WTC11 (cell line): ENCODE measurements at regions of chr17 and their contacts with region 1.

Region 1: DNA sequence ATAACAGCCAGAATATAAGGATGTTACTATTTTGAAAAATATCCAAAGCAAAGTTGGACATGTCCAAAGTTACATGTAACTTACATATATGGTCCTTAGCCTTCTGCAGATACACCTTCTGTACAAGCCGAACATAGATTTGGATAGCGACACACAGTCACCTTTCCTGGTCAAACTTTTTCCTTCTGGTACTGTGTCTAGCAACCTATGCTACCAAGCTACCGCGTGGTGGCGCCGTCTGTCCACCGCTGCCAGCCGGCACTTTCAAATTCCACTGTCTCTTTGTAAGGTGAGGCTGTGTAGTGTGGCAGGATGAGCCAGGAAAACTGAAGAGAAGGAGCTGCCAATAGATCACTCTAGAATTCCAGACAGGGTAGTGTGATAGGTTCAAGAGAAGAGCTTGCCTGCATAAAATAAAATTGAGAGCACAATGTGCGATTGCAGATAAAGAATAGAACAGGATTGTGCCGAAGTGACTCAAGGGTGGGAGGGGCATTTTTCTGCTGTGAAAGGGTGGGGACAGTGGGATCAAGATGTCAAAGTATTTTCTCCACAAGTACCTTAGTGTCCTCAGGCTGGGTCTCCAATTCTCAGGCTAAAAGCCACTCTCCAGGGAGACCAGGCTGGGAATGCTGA is 366.9 kb downstream of the SLC39A11 start:
- DNase-seq: peak; percentile 64
- ATAC-seq: peak; percentile 77
- H3K4me3 Mint-ChIP-seq: no peak overlapping the region
- H3K27ac Mint-ChIP-seq: peak overlapping the region; percentile 50; the same call in 1 of the 2 replicates
- H3K4me1 Mint-ChIP-seq: peaks cover 48% of the 10 kb centered on the region
- H3K27me3 Mint-ChIP-seq: no peaks in the 10 kb centered on the region
- CTCF ChIP-seq: peak; percentile 87

Region 2: GRCh38 chr17:72592242-72592966 is 133.1 kb before region 1 on chr17:
- CTCF ChIA-PET with region 1: interaction called, 10 read pairs
- POLR2A ChIA-PET with region 1: no interaction called
- DNase-seq: peak; percentile 81
- ATAC-seq: peak; percentile 84
- H3K4me3 Mint-ChIP-seq: peak overlapping the region; percentile 84
- H3K27ac Mint-ChIP-seq: no peak overlapping the region
- H3K4me1 Mint-ChIP-seq: peaks cover 32% of the 10 kb centered on the region
- H3K27me3 Mint-ChIP-seq: peaks cover 53% of the 10 kb centered on the region
- CTCF ChIP-seq: no peak

Region 3: GRCh38 chr17:72775919-72776318 is 50.4 kb after region 1 on chr17:
- CTCF ChIA-PET with region 1: interaction called, 16 read pairs
- POLR2A ChIA-PET with region 1: no interaction called
- DNase-seq: no peak
- ATAC-seq: no peak
- H3K4me3 Mint-ChIP-seq: no peak overlapping the region
- H3K27ac Mint-ChIP-seq: no peak overlapping the region
- H3K4me1 Mint-ChIP-seq: peaks cover 12% of the 10 kb centered on the region
- H3K27me3 Mint-ChIP-seq: peaks cover 2% of the 10 kb centered on the region; the same call in 1 of the 2 replicates
- CTCF ChIP-seq: no peak

Region 4: DNA sequence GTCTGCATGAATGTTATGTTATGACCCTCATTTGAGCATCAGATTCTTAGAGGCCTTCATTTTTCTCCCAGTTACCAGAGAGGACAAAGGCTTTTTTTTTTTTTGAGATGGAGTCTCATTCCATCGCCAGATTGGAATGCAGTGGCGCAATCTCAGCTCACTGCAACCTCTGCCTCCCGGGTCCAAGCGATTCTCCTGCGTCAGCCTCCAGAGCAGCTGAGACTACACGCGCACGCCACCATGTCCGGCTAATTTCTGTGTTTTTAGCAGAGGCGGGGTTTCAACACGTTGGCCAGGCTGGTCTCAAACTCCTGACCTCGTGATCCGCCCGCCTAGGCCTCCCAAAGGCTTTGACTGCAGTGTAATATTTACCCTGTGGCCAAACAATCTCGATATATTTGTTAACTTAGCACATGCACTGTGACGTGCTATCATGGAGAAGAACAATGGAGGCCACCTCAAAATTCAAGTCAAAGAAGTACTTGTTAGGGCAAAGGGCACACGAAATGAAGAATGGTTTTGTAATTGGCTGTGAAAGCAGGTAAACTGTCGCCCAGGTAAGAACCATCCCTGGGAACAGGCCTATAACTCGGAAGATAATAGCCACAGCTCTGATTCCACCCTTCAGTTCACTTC is 63.5 kb after region 1 on chr17:
- CTCF ChIA-PET with region 1: no interaction called
- POLR2A ChIA-PET with region 1: no interaction called
- DNase-seq: no peak
- ATAC-seq: no peak
- H3K4me3 Mint-ChIP-seq: no peak overlapping the region
- H3K27ac Mint-ChIP-seq: no peak overlapping the region
- H3K4me1 Mint-ChIP-seq: no peaks in the 10 kb centered on the region
- H3K27me3 Mint-ChIP-seq: no peaks in the 10 kb centered on the region
- CTCF ChIP-seq: no peak

Region 5: GRCh38 chr17:72985881-72986720 is 260.6 kb after region 1 on chr17:
- CTCF ChIA-PET with region 1: interaction called, 39 read pairs
- POLR2A ChIA-PET with region 1: interaction called, 4 read pairs
- DNase-seq: peak; percentile 78
- ATAC-seq: peak; percentile 97
- H3K4me3 Mint-ChIP-seq: no peak overlapping the region
- H3K27ac Mint-ChIP-seq: no peak overlapping the region
- H3K4me1 Mint-ChIP-seq: peaks cover 5% of the 10 kb centered on the region; the same call in 1 of the 2 replicates
- H3K27me3 Mint-ChIP-seq: no peaks in the 10 kb centered on the region
- CTCF ChIP-seq: peak; percentile 85

Region 6: DNA sequence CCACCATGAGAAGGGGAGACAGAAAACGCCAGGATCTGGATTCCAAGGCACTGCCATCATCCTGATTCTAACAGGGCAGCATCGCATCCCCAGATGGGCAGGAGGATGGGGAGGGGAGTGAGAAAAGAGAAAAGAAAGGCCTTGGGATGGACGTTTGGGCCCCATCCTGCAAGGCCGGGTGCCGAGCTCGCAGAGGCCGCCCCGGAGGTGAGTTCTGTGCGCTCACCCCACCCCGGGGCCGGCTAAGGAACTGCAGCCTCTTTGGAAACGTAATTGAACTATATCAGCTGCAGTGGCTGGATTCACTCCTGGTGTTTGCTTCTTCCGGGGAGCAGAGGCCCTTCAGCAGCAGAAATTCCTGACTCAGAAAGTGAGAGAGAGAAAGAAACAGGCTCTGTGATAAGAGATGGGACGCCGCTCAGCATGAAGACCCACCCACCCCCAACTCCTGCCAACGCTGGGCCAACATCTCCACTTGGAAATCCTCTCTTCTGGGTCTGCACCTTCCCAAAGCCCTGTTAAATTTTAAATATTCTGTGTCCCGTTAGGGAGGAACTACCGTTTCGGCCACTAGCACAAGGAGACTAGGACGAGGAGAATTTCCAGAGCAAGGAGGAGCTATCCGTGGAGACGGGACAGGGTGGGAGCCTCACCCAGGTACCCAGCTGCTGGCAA is 430.8 kb after region 1 on chr17:
- CTCF ChIA-PET with region 1: interaction called, 29 read pairs
- POLR2A ChIA-PET with region 1: no interaction called
- DNase-seq: peak; percentile 85
- ATAC-seq: peak; percentile 95
- H3K4me3 Mint-ChIP-seq: no peak overlapping the region
- H3K27ac Mint-ChIP-seq: no peak overlapping the region
- H3K4me1 Mint-ChIP-seq: peaks cover 40% of the 10 kb centered on the region
- H3K27me3 Mint-ChIP-seq: no peaks in the 10 kb centered on the region
- CTCF ChIP-seq: peak; percentile 58

Region 7: DNA sequence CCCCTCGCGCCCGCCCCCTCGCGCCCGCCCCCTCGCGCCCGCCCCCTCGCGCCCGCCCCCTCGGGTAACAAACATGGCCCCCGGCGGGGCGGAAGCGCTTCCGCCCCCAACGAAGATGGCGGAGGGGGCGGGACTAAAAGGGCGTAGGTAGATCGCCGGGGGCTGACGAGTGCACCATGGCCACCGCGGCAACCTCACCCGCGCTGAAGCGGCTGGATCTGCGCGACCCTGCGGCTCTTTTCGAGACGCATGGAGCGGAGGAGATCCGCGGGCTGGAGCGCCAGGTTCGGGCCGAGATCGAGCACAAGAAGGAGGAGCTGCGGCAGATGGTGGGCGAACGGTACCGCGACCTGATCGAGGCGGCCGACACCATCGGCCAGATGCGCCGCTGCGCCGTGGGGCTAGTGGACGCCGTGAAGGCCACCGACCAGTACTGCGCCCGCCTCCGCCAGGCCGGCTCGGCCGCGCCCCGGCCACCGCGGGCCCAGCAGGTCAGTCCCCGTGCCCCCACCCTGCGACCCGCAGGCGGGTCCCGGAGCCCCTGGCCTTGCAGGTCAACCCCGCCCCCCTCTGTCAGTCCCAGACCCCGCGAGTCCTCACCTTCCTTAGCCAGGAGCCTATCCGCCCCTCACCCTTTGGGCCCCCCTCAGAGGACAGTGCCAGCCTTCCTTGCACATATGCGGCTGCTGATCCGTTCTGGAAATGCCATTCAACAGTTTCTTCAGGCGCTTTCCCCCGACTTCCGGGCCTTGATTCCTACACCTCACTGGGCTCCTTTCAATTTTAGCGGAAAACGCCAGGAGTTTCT is 467.5 kb after region 1 on chr17 and contains the start of gene COG1:
- CTCF ChIA-PET with region 1: interaction called, 48 read pairs
- POLR2A ChIA-PET with region 1: interaction called, 3 read pairs
- DNase-seq: peak; percentile 82
- ATAC-seq: peak; percentile 65
- H3K4me3 Mint-ChIP-seq: peak within 1 kb of the TSS; percentile 96
- H3K27ac Mint-ChIP-seq: peak within 1 kb of the TSS; percentile 97
- H3K4me1 Mint-ChIP-seq: peaks cover 21% of the 10 kb centered on the region
- H3K27me3 Mint-ChIP-seq: no peaks in the 10 kb centered on the region
- CTCF ChIP-seq: no peak
- total RNA-seq, gene COG1: 19.2 to 22.6 TPM (median 19.5 TPM) in 3 replicates